ENCODE measurements at regions of chr3 and their contacts with region 1.

Region 1: DNA sequence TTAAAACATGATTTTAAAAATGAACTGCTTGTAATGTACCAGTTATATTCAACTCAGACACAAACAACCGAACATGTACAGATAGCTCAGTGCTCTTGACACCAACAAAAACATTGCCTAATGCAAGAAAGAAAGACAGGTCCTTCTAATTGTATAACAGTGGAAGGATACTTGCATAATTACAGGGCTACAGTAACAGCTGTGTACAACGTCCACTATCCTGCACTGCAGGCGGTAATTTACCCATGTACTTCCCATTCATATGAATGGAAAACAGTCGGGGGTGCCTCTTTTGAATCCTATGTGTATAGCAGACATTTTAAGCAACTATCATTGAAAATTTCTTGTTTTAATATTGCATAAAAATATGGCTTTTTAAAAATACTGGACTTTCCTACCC is 41.1 kb upstream of the PLSCR5 start:
- DNase-seq: no peak
- H3K4me3 ChIP-seq: no peak overlapping the region
- CTCF ChIP-seq: no peak

Region 2: GRCh38 chr3:146350852-146351251 is 295.4 kb before region 1 on chr3:
- CTCF ChIA-PET with region 1: no interaction called
- POLR2A ChIA-PET with region 1: no interaction called
- DNase-seq: no peak
- H3K4me3 ChIP-seq: no peak overlapping the region
- CTCF ChIP-seq: no peak

Region 3: GRCh38 chr3:146589899-146590508 is 56.3 kb before region 1 on chr3:
- CTCF ChIA-PET with region 1: interaction called, 41 read pairs
- POLR2A ChIA-PET with region 1: no interaction called
- DNase-seq: no peak
- H3K4me3 ChIP-seq: no peak overlapping the region
- CTCF ChIP-seq: peak; percentile 28

Measured in AG04449 (cell line).